Endothelial cell of umbilical vein (primary cell): ENCODE measurements at regions of chr5 and their contacts with region 1.

Region 1: GRCh38 chr5:79702606-79703382 is 13.2 kb downstream of the CMYA5 start:
- DNase-seq: peak; percentile 7
- H3K4me3 ChIP-seq: no peak overlapping the region
- H3K27ac ChIP-seq: no peak overlapping the region
- H3K4me1 ChIP-seq: no peaks in the 10 kb centered on the region
- H3K27me3 ChIP-seq: peaks cover 0 to 2% of the 10 kb centered on the region in 2 experiments
- CTCF ChIP-seq: peak; percentile 46 to 59
- POLR2A ChIP-seq: no peak

Region 2: DNA sequence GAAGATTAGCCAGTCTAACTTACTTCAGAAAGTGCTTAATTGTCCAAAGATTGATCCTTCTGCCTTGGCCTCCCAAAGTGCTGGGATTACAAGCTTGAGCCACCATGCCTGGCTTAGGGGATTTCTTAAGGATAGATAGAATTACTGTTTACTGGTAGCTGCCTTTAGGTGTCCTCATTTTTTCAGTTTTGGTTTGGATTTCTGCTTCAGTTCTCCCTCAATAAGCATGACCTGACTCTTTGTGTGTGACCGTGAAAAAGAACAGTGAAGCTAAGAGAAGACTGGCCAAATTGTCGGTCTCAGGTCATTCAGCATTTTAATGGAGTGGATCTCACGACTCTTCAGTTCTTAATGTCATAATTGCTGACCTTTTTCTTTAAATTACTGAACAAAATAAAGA is 36.0 kb before region 1 on chr5:
- CTCF ChIA-PET with region 1: no interaction called
- POLR2A ChIA-PET with region 1: no interaction called
- dilution Hi-C with region 1: no loop called
- intact Hi-C with region 1: no loop called
- DNase-seq: no peak
- H3K4me3 ChIP-seq: no peak overlapping the region
- H3K27ac ChIP-seq: no peak overlapping the region
- H3K4me1 ChIP-seq: no peaks in the 10 kb centered on the region
- H3K27me3 ChIP-seq: no peaks in the 10 kb centered on the region
- CTCF ChIP-seq: no peak
- POLR2A ChIP-seq: no peak

Region 3: DNA sequence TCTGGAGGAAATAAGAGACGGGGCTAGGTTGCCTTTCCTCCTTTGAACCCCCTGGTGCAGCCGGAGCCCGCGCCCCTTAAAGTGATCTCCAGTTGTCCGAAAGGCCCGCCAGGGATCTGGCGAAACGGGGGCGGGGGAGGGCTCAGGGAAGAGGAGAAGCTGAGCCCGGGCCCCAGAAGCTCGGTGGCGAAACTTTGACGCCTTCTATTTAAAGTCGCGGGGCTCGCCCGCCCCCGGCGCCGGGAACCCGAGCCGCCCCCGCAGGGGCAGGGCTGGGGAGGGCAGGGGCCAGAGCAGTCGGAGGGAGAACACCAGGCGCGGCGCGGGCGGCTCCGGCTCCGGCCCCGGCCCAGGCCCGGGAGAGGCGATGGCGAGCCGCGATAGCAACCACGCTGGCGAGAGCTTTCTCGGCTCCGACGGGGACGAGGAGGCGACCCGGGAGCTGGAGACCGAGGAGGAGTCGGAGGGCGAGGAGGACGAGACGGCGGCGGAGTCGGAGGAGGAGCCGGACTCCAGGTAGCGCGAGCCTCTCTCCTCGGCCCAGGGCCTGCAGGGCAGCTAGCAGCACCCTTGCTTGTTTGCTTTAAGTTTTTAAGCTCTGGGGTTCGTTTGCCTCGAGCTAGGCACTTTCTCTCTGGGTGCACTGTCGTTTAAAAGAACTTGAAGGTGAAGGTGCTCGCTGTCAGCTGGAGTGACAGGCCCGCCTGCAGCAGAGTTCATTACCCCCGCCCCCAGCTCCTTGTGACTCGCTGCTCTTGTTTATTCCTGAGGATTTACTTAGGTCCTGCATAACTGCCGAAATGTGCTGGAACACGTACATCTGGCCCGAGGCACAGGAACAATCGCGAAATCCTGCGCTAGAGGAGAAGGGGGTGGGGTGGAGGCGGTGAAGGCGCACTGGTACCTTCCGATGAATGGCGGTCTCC is 13.0 kb before region 1 on chr5 and contains the start of gene CMYA5:
- CTCF ChIA-PET with region 1: interaction called, 12 read pairs
- POLR2A ChIA-PET with region 1: no interaction called
- dilution Hi-C with region 1: no loop called
- intact Hi-C with region 1: no loop called
- DNase-seq: no peak
- H3K4me3 ChIP-seq: peak within 1 kb of the TSS in 1 of 3 experiments; percentile 17
- H3K27ac ChIP-seq: no peak within 1 kb of the TSS
- H3K4me1 ChIP-seq: no peaks in the 10 kb centered on the region
- H3K27me3 ChIP-seq: no peaks in the 10 kb centered on the region
- CTCF ChIP-seq: no peak
- POLR2A ChIP-seq: no peak
- total RNA-seq, gene CMYA5: 0.09 and 0.20 TPM in 2 replicates

Region 4: GRCh38 chr5:79857714-79858409 is 155.1 kb after region 1 on chr5:
- CTCF ChIA-PET with region 1: interaction called, 7 read pairs
- POLR2A ChIA-PET with region 1: no interaction called
- dilution Hi-C with region 1: no loop called
- intact Hi-C with region 1: loop called (anchors 1 kb)
- DNase-seq: peak; percentile 66
- H3K4me3 ChIP-seq: no peak overlapping the region
- H3K27ac ChIP-seq: no peak overlapping the region
- H3K4me1 ChIP-seq: no peaks in the 10 kb centered on the region
- H3K27me3 ChIP-seq: no peaks in the 10 kb centered on the region
- CTCF ChIP-seq: peak; percentile 92 to 94
- POLR2A ChIP-seq: no peak